ENCODE measurements at regions of chr21 and their contacts with region 1.

Region 1: GRCh38 chr21:27700974-27701614 is 734.2 kb upstream of the ADAMTS5 start:
- DNase-seq: peak; percentile 86 to 94
- ATAC-seq: peak; percentile 91
- H3K4me3 ChIP-seq: no peak overlapping the region
- H3K27ac ChIP-seq: no peak overlapping the region
- H3K4me1 ChIP-seq: no peaks in the 10 kb centered on the region
- H3K27me3 ChIP-seq: no peaks in the 10 kb centered on the region

Region 2: GRCh38 chr21:26769613-26770188 is 931.4 kb before region 1 on chr21:
- intact Hi-C with region 1: loop called (anchors 10 kb)
- DNase-seq: no peak
- ATAC-seq: no peak
- H3K4me3 ChIP-seq: no peak overlapping the region
- H3K27ac ChIP-seq: no peak overlapping the region
- H3K4me1 ChIP-seq: no peaks in the 10 kb centered on the region
- H3K27me3 ChIP-seq: no peaks in the 10 kb centered on the region

Region 3: DNA sequence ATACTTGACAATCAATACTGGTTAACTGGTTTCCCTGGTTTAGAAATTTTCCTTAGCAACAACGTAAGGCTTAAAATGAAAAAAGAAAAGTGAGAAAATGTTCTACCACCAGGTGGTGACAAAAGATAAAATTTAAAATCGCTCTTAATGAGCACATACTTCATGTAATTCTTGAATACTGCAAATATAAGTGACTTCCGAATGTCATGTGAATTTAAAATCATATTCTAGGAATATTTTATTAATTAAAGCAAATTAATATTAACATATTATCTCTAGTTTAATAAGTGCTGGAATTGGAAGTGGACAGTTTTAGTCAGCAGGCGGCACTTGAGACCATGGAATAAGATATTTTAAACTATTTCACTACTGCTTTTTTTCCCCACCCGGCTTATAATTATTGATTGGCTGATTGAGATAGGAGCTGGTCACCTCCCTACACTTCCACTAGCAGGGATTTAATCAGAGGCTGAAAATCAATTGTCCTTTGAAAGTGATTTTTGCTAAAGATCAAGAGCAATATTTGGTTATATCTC is 850.9 kb before region 1 on chr21:
- intact Hi-C with region 1: loop called (anchors 1 to 2 kb)
- DNase-seq: no peak
- ATAC-seq: no peak
- H3K4me3 ChIP-seq: no peak overlapping the region
- H3K27ac ChIP-seq: no peak overlapping the region
- H3K4me1 ChIP-seq: no peaks in the 10 kb centered on the region
- H3K27me3 ChIP-seq: no peaks in the 10 kb centered on the region

Region 4: GRCh38 chr21:28336314-28336713 is 635.2 kb after region 1 on chr21:
- intact Hi-C with region 1: loop called in 1 of 2 experiments (anchors 5 kb)
- DNase-seq: no peak
- ATAC-seq: no peak
- H3K4me3 ChIP-seq: no peak overlapping the region
- H3K27ac ChIP-seq: no peak overlapping the region
- H3K4me1 ChIP-seq: no peaks in the 10 kb centered on the region
- H3K27me3 ChIP-seq: no peaks in the 10 kb centered on the region

Region 5: GRCh38 chr21:28943631-28944030 is 1242.5 kb after region 1 on chr21:
- intact Hi-C with region 1: loop called (anchors 5 to 10 kb)
- DNase-seq: no peak
- ATAC-seq: no peak
- H3K4me3 ChIP-seq: no peak overlapping the region
- H3K27ac ChIP-seq: peak overlapping the region in 1 of 2 donors; percentile 57
- H3K4me1 ChIP-seq: no peaks in the 10 kb centered on the region
- H3K27me3 ChIP-seq: no peaks in the 10 kb centered on the region

Measured in aorta (tissue), 5 donors.